ENCODE measurements at regions of chr5 and their contacts with region 1.

Region 1: GRCh38 chr5:141903261-141903660 is 20.4 kb upstream of the DELE1 start:
- DNase-seq: no peak
- H3K4me3 ChIP-seq: no peak overlapping the region
- H3K27ac ChIP-seq: no peak overlapping the region
- H3K4me1 ChIP-seq: no peaks in the 10 kb centered on the region
- H3K27me3 ChIP-seq: no peaks in the 10 kb centered on the region
- CTCF ChIP-seq: no peak

Region 2: DNA sequence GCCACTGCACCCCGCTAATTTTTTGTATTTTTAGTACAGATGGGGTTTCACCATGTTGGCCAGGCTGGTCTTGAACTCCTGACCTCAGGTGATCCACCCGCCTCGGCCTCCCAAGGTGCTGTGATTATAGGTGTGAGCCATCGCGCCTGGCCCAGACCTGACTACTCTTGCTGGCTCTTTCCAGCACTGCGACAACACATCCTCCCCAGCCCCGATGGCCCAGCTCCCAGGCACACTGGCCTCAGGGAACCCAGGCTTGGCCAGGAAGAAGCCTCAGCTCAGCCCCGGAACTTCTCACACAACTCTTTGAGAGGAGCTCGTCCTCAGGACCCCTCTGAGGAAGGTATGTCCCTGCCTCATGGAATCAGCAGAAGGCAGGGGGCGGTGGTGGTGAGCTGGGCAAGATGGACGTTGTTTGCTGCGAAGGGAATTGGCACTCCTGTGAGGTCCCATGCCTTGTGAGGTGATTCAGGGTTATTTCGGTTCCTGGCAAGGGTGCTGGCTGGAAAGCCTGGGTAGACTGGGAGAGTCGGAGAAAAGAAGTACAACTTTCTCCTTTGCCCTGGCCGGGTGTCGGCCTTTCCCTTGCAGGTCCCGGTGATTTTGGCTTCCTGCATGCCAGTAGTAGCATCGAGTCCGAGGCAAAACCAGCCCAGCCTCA is 26.3 kb after region 1 on chr5:
- CTCF ChIA-PET with region 1: no interaction called
- dilution Hi-C with region 1: no loop called
- in situ Hi-C with region 1: no loop called
- intact Hi-C with region 1: no loop called
- DNase-seq: no peak
- H3K4me3 ChIP-seq: no peak overlapping the region
- H3K27ac ChIP-seq: no peak overlapping the region
- H3K4me1 ChIP-seq: peaks cover 1% of the 10 kb centered on the region
- H3K27me3 ChIP-seq: no peaks in the 10 kb centered on the region
- CTCF ChIP-seq: no peak

Region 3: DNA sequence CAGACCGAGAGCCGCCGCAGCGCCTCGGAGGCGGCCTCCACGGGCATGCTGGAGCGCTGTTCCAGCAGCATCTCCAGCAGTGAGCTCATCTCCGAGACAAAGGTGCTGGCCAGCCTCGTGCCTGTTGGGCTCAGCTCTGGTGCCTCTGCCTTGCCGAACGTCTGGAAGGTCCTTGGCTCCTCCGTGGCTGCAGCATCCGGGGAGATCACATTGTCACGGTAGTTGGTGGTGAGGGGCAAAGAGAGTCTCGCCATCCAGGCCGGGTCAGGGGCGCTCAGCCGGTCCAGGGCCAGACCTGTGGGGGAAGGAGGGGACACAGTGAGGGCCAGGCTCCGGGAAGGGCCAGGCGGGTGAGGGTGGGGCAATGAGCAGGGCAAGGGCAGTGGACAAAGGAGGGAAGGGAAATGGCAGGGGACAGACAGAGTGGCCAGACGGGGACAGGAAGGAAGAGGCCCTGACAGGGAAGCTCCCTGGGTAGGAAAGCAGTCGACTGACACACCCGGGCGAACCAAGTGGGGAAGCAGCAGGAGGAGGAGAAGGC is 42.3 kb after region 1 on chr5:
- CTCF ChIA-PET with region 1: no interaction called
- dilution Hi-C with region 1: loop called (anchors 5 kb)
- in situ Hi-C with region 1: no loop called
- intact Hi-C with region 1: no loop called
- DNase-seq: no peak
- H3K4me3 ChIP-seq: no peak overlapping the region
- H3K27ac ChIP-seq: no peak overlapping the region
- H3K4me1 ChIP-seq: peaks cover 25% of the 10 kb centered on the region
- H3K27me3 ChIP-seq: no peaks in the 10 kb centered on the region
- CTCF ChIP-seq: no peak

Measured in mammary epithelial cell (primary cell).